ENCODE measurements at regions of chr6 and their contacts with region 1.

Region 1: GRCh38 chr6:135114355-135115145 is 59.9 kb upstream of the HBS1L start:
- DNase-seq: no peak
- ATAC-seq: peak; percentile 35
- H3K4me3 ChIP-seq: no peak overlapping the region
- H3K4me3 Mint-ChIP-seq: no peak overlapping the region
- H3K27ac ChIP-seq: no peak overlapping the region
- H3K27ac Mint-ChIP-seq: peak overlapping the region; percentile 29
- H3K4me1 ChIP-seq: peaks cover 40% of the 10 kb centered on the region
- H3K4me1 Mint-ChIP-seq: peaks cover 64% of the 10 kb centered on the region
- H3K27me3 ChIP-seq: no peaks in the 10 kb centered on the region
- H3K27me3 Mint-ChIP-seq: no peaks in the 10 kb centered on the region
- CTCF ChIP-seq: no peak

Region 2: DNA sequence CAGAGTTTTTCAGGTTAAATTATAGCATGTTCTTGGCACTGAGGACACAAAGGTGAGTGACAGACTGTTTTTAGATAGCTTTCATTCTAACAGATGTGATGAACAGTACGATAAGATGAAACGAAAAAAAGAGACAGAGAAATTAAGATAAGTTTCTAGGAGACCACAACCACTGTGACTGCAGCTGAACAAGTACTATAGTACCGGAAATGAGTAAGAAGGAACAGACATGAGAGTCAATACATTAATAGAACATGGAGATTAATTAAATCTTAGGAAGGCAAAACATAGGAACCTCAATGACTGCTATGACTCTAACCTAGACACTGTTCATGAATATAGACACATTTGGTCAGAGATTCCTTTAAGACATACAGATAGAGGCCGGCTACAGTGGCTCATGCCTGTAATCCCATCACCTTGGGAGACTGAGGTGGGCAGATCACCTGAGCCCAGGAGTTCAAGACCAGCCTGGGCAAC is 100.2 kb before region 1 on chr6:
- CTCF ChIA-PET with region 1: no interaction called
- POLR2A ChIA-PET with region 1: no interaction called
- intact Hi-C with region 1: no loop called
- DNase-seq: peak in 2 of 9 experiments; percentile 37 to 60
- ATAC-seq: peak; percentile 82
- H3K4me3 ChIP-seq: peak overlapping the region; percentile 8 to 9
- H3K4me3 Mint-ChIP-seq: peak overlapping the region; percentile 49
- H3K27ac ChIP-seq: peak overlapping the region; percentile 55 to 66
- H3K27ac Mint-ChIP-seq: peak overlapping the region; percentile 86
- H3K4me1 ChIP-seq: peaks cover 70% of the 10 kb centered on the region
- H3K4me1 Mint-ChIP-seq: peaks cover 64% of the 10 kb centered on the region
- H3K27me3 ChIP-seq: no peaks in the 10 kb centered on the region
- H3K27me3 Mint-ChIP-seq: no peaks in the 10 kb centered on the region
- CTCF ChIP-seq: no peak

Region 3: DNA sequence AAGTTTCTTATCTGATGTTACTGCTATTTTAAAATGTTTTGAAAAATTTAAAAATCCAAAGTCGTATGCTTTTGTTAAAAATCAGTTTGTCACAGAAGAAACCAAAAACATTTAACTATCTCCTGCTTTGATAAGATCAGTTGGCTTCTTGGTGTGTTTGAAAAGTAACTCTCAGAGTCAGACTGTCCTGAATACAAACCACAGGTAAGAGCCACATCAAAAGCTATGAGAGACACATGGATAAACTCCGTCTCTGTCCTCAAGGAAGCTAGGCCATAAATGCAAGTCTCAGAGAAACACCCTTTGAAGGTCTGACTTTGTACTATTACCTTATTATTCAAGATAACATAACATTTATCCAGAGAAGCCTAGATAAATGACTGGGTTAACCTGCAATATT is 67.6 kb before region 1 on chr6:
- CTCF ChIA-PET with region 1: no interaction called
- POLR2A ChIA-PET with region 1: no interaction called
- intact Hi-C with region 1: no loop called
- DNase-seq: peak in 1 of 9 experiments; percentile 21
- ATAC-seq: no peak
- H3K4me3 ChIP-seq: no peak overlapping the region
- H3K4me3 Mint-ChIP-seq: no peak overlapping the region
- H3K27ac ChIP-seq: no peak overlapping the region
- H3K27ac Mint-ChIP-seq: peak overlapping the region; percentile 37
- H3K4me1 ChIP-seq: peaks cover 40% of the 10 kb centered on the region
- H3K4me1 Mint-ChIP-seq: peaks cover 72% of the 10 kb centered on the region
- H3K27me3 ChIP-seq: no peaks in the 10 kb centered on the region
- H3K27me3 Mint-ChIP-seq: no peaks in the 10 kb centered on the region
- CTCF ChIP-seq: no peak

Region 4: DNA sequence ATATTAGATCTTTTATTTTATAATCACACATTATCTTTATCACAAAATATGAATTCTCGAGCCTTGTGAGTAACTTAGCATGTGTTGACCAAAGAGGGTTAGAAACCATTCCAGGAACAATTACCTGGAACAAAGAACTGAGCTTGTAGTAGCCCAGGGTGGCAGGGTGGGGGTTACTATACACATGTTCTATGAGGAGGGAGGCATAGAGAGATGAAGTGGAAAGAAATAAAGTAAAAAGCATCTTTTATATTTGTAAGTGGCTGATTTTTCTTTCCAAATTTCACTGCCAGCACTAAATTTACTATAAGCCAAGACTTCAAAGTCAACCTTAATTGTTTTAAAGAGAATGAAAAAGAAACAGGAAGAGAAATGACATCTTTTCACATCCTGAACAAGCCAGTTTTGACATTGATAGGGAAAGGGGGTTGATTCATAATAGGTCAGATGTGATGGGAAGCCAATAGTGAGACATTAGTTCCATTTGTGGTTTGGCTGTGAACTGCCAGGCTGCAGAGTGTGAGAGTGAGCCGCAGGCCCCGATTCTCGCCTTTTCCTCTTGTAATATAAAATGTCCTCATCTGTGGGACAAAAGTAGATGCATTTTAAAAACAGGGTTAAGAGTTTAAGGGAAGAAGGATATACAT is 13.8 kb after region 1 on chr6:
- CTCF ChIA-PET with region 1: interaction called, 3 read pairs
- POLR2A ChIA-PET with region 1: interaction called, 10 read pairs
- intact Hi-C with region 1: loop called in 1 of 2 experiments (anchors 1 kb)
- DNase-seq: peak in 7 of 9 experiments; percentile 36 to 89 (median 54)
- ATAC-seq: peak; percentile 92
- H3K4me3 ChIP-seq: peak overlapping the region in 1 of 2 experiments; percentile 9
- H3K4me3 Mint-ChIP-seq: peak overlapping the region; percentile 59
- H3K27ac ChIP-seq: peak overlapping the region; percentile 25 to 81
- H3K27ac Mint-ChIP-seq: peak overlapping the region; percentile 95
- H3K4me1 ChIP-seq: peaks cover 25% of the 10 kb centered on the region
- H3K4me1 Mint-ChIP-seq: peaks cover 42% of the 10 kb centered on the region
- H3K27me3 ChIP-seq: no peaks in the 10 kb centered on the region
- H3K27me3 Mint-ChIP-seq: no peaks in the 10 kb centered on the region
- CTCF ChIP-seq: no peak